ENCODE measurements at regions of chr19 and their contacts with region 1.

Region 1: DNA sequence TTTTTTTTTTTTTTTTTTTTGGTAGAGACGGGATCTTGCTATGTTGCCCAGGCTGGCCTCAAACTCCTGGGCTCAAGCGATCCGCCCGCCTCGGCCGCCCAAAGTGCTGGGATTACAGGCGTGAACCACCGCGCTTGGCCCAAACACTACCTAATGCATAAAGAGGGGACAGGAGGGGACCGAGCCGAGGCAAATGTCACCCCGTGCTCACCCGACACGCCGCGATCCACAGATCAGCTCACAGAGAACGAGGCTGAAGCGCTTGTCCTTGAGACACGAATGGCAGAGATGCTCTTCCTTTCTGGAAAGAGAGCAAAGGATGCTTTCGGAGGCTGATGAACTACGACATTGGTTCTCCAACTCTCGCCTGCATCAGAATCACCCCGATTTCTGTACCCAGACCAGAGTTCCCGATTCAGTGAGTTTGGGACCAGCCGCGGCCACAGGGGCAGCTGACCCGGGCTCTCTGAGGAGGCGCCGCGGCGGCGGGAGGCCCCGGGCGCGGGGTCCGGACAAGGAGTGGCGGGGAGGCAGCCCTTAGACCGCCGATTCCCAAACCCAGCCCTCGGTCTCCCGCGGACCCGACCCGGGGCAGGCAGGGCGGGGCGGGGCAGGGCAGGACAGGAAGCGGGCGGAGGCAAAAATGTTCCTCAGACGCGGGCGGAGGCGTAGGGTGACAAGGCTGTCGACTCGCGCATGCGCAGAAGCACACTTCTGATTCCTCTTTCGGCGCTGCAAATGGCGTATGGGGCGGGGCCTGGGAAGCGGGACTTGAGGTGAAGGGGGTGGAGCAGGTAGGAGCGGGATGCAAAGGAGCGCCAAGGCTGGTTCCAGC is at the start of gene ZNF699:
- DNase-seq: peak; percentile 99
- ATAC-seq: peak; percentile 87
- H3K4me3 ChIP-seq: peak within 1 kb of the TSS; percentile 77 to 100 (median 87)
- H3K4me3 Mint-ChIP-seq: peak within 1 kb of the TSS; percentile 87
- H3K27ac ChIP-seq: peak within 1 kb of the TSS; percentile 73 to 92
- H3K27ac Mint-ChIP-seq: peak within 1 kb of the TSS; percentile 92
- H3K4me1 ChIP-seq: peaks cover 9 to 12% of the 10 kb centered on the region in 2 donors
- H3K4me1 Mint-ChIP-seq: peaks cover 24% of the 10 kb centered on the region
- H3K27me3 ChIP-seq: no peaks in the 10 kb centered on the region
- H3K27me3 Mint-ChIP-seq: no peaks in the 10 kb centered on the region
- CTCF ChIP-seq: no peak
- total RNA-seq, gene ZNF699: 17.3 and 22.0 TPM in 2 replicates

Region 2: DNA sequence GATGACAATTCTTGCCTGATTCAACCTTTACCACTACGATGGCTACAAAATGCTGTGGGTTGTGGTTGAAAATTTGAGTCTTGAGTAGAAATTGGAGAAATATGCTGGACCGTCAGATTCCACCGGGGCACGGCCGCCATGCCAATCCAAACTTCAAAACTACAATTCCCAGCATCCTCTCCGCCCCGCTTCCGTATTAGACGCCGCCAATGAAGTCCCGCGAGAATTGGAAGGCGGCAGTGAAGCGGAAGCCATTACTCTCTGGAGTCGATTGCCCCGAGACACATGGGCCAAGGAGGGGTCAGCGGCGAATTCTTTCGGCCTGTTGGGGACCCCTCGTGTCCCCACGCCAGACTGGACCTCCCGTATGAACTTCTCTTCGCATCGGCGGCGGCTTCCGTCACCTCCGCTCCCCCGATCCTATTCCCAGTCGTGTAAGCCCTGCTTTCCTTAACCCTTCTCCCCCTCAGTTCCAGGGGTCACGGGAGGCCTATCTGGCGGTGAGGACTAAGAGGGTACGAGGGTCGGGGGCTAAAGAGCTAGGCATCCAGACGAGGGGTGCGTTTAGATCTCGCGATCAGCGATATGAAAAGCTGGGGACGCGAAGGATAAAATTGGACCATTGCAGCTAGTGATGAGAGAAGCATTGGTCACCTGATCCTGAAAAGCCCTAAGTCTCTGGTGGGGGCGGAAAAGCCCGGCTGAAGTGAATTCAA is 169.0 kb before region 1 on chr19 and contains the start of gene ZNF317:
- CTCF ChIA-PET with region 1: no interaction called
- POLR2A ChIA-PET with region 1: no interaction called
- intact Hi-C with region 1: loop called (anchors 1 kb)
- DNase-seq: peak; percentile 94
- ATAC-seq: peak; percentile 90
- H3K4me3 ChIP-seq: peak within 1 kb of the TSS; percentile 70 to 99 (median 97)
- H3K4me3 Mint-ChIP-seq: peak within 1 kb of the TSS; percentile 98
- H3K27ac ChIP-seq: peak within 1 kb of the TSS; percentile 86 to 90
- H3K27ac Mint-ChIP-seq: peak within 1 kb of the TSS; percentile 97
- H3K4me1 ChIP-seq: peaks cover 13 to 15% of the 10 kb centered on the region in 2 donors
- H3K4me1 Mint-ChIP-seq: peaks cover 33% of the 10 kb centered on the region
- H3K27me3 ChIP-seq: no peaks in the 10 kb centered on the region
- H3K27me3 Mint-ChIP-seq: peaks cover 2% of the 10 kb centered on the region
- CTCF ChIP-seq: no peak
- total RNA-seq, gene ZNF317: 60.6 and 65.2 TPM in 2 replicates

Region 3: GRCh38 chr19:9205501-9206113 is 103.7 kb before region 1 on chr19:
- CTCF ChIA-PET with region 1: no interaction called
- POLR2A ChIA-PET with region 1: no interaction called
- intact Hi-C with region 1: loop called (anchors 5 kb)
- DNase-seq: peak; percentile 73
- ATAC-seq: peak; percentile 57
- H3K4me3 ChIP-seq: peak overlapping the region in 4 of 5 experiments; percentile 21 to 42 (median 33)
- H3K4me3 Mint-ChIP-seq: peak overlapping the region; percentile 78
- H3K27ac ChIP-seq: no peak overlapping the region
- H3K27ac Mint-ChIP-seq: no peak overlapping the region
- H3K4me1 ChIP-seq: peaks cover 0 to 4% of the 10 kb centered on the region in 2 donors
- H3K4me1 Mint-ChIP-seq: peaks cover 6% of the 10 kb centered on the region
- H3K27me3 ChIP-seq: no peaks in the 10 kb centered on the region
- H3K27me3 Mint-ChIP-seq: peaks cover 4% of the 10 kb centered on the region
- CTCF ChIP-seq: peak; percentile 97

Region 4: GRCh38 chr19:9289231-9289884 is 20.0 kb before region 1 on chr19:
- CTCF ChIA-PET with region 1: no interaction called
- POLR2A ChIA-PET with region 1: no interaction called
- intact Hi-C with region 1: no loop called
- DNase-seq: no peak
- ATAC-seq: no peak
- H3K4me3 ChIP-seq: no peak overlapping the region
- H3K4me3 Mint-ChIP-seq: no peak overlapping the region
- H3K27ac ChIP-seq: no peak overlapping the region
- H3K27ac Mint-ChIP-seq: no peak overlapping the region
- H3K4me1 ChIP-seq: no peaks in the 10 kb centered on the region
- H3K4me1 Mint-ChIP-seq: no peaks in the 10 kb centered on the region
- H3K27me3 ChIP-seq: no peaks in the 10 kb centered on the region
- H3K27me3 Mint-ChIP-seq: no peaks in the 10 kb centered on the region
- CTCF ChIP-seq: no peak

Region 5: DNA sequence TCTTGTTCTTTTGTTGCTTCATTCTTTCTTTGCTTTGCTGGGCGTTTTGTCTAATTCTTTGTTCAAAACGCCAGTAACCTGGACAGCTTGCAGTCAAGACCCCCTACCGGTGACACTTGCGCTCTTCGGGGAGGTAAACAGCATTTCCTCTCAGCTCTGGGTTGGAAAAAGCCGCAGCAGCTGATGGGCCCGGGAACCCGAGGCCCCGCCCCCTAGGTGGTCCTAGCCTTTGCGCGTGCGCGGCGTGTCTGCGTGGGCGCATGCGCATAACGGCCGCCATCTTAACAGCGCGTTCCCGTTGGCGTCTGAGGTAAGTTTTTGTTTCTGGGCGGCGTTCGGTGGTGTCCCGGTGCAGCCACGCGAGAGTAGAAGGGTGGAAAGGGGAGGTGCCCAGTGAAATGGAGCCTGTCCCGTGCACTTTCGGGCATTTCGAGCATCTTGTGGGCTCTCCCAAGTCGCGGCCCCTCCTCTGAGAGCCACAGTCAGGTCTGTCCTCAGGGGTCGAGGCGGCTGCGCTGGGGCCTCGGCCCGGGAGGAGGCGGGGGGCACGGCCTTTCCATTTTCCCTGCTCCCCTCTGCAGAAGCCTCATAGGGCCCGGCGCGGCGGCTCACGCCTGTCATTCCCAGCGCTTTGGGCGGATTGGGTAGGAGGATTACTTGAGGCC is 14.7 kb after region 1 on chr19 and contains the start of gene ZNF559:
- CTCF ChIA-PET with region 1: interaction called, 13 read pairs
- POLR2A ChIA-PET with region 1: interaction called, 5 read pairs
- intact Hi-C with region 1: loop called (anchors 1 kb)
- DNase-seq: peak; percentile 98
- ATAC-seq: peak; percentile 89
- H3K4me3 ChIP-seq: peak within 1 kb of the TSS; percentile 72 to 88 (median 79)
- H3K4me3 Mint-ChIP-seq: peak within 1 kb of the TSS; percentile 96
- H3K27ac ChIP-seq: peak within 1 kb of the TSS; percentile 78 to 81
- H3K27ac Mint-ChIP-seq: peak within 1 kb of the TSS; percentile 96
- H3K4me1 ChIP-seq: peaks cover 11 to 17% of the 10 kb centered on the region in 2 donors
- H3K4me1 Mint-ChIP-seq: peaks cover 24% of the 10 kb centered on the region
- H3K27me3 ChIP-seq: no peaks in the 10 kb centered on the region
- H3K27me3 Mint-ChIP-seq: no peaks in the 10 kb centered on the region
- CTCF ChIP-seq: peak; percentile 59
- total RNA-seq, gene ZNF559: 49.3 and 60.9 TPM in 2 replicates

Region 6: GRCh38 chr19:9435279-9436268 is 126.2 kb after region 1 on chr19 and contains the start of gene ZNF266:
- CTCF ChIA-PET with region 1: no interaction called
- POLR2A ChIA-PET with region 1: no interaction called
- intact Hi-C with region 1: loop called (anchors 1 kb)
- DNase-seq: peak; percentile 95
- ATAC-seq: peak; percentile 93
- H3K4me3 ChIP-seq: peak within 1 kb of the TSS; percentile 64 to 91 (median 80)
- H3K4me3 Mint-ChIP-seq: peak within 1 kb of the TSS; percentile 95
- H3K27ac ChIP-seq: peak within 1 kb of the TSS; percentile 92 to 93
- H3K27ac Mint-ChIP-seq: peak within 1 kb of the TSS; percentile 98
- H3K4me1 ChIP-seq: peaks cover 16 to 26% of the 10 kb centered on the region in 2 donors
- H3K4me1 Mint-ChIP-seq: peaks cover 35% of the 10 kb centered on the region
- H3K27me3 ChIP-seq: no peaks in the 10 kb centered on the region
- H3K27me3 Mint-ChIP-seq: no peaks in the 10 kb centered on the region
- CTCF ChIP-seq: peak; percentile 77
- total RNA-seq, gene ZNF266: 76.0 and 81.4 TPM in 2 replicates

Region 7: GRCh38 chr19:9538183-9539058 is 229.1 kb after region 1 on chr19 and contains the start of gene ZNF426:
- CTCF ChIA-PET with region 1: no interaction called
- POLR2A ChIA-PET with region 1: no interaction called
- intact Hi-C with region 1: loop called (anchors 1 kb)
- DNase-seq: peak; percentile 90
- ATAC-seq: peak; percentile 87
- H3K4me3 ChIP-seq: peak within 1 kb of the TSS; percentile 63 to 97 (median 77)
- H3K4me3 Mint-ChIP-seq: peak within 1 kb of the TSS; percentile 100
- H3K27ac ChIP-seq: peak within 1 kb of the TSS; percentile 80 to 88
- H3K27ac Mint-ChIP-seq: peak within 1 kb of the TSS; percentile 99
- H3K4me1 ChIP-seq: peaks cover 7 to 11% of the 10 kb centered on the region in 2 donors
- H3K4me1 Mint-ChIP-seq: peaks cover 25% of the 10 kb centered on the region
- H3K27me3 ChIP-seq: no peaks in the 10 kb centered on the region
- H3K27me3 Mint-ChIP-seq: no peaks in the 10 kb centered on the region
- CTCF ChIP-seq: no peak
- total RNA-seq, gene ZNF426: 22.1 and 22.3 TPM in 2 replicates

Region 8: GRCh38 chr19:9768175-9769112 is 459.1 kb after region 1 on chr19 and contains the start of gene ZNF846:
- CTCF ChIA-PET with region 1: no interaction called
- POLR2A ChIA-PET with region 1: no interaction called
- intact Hi-C with region 1: loop called (anchors 1 kb)
- DNase-seq: peak; percentile 96
- ATAC-seq: peak; percentile 98
- H3K4me3 ChIP-seq: peak within 1 kb of the TSS; percentile 52 to 96 (median 88)
- H3K4me3 Mint-ChIP-seq: peak within 1 kb of the TSS; percentile 96
- H3K27ac ChIP-seq: peak within 1 kb of the TSS; percentile 69 to 94
- H3K27ac Mint-ChIP-seq: peak within 1 kb of the TSS; percentile 98
- H3K4me1 ChIP-seq: peaks cover 0 to 13% of the 10 kb centered on the region in 2 donors
- H3K4me1 Mint-ChIP-seq: peaks cover 15% of the 10 kb centered on the region
- H3K27me3 ChIP-seq: no peaks in the 10 kb centered on the region
- H3K27me3 Mint-ChIP-seq: no peaks in the 10 kb centered on the region
- CTCF ChIP-seq: no peak
- total RNA-seq, gene ZNF846: 18.2 and 24.5 TPM in 2 replicates